Activated CD4-positive, alpha-beta T cell treated with anti-CD3 and anti-CD28 coated beads, Interleukin-2, amount 10 ng/mL, durations not matched to agents 24 days and 14 days (primary cell): ENCODE measurements at regions of chr17 and their contacts with region 1.

Region 1: GRCh38 chr17:64115871-64116534 is 13.9 kb downstream of the ERN1 start:
- DNase-seq: no peak
- H3K4me3 Mint-ChIP-seq: peak overlapping the region; percentile 59
- H3K27ac Mint-ChIP-seq: peak overlapping the region; percentile 79
- H3K4me1 Mint-ChIP-seq: peaks cover 56% of the 10 kb centered on the region
- H3K27me3 Mint-ChIP-seq: no peaks in the 10 kb centered on the region

Region 2: DNA sequence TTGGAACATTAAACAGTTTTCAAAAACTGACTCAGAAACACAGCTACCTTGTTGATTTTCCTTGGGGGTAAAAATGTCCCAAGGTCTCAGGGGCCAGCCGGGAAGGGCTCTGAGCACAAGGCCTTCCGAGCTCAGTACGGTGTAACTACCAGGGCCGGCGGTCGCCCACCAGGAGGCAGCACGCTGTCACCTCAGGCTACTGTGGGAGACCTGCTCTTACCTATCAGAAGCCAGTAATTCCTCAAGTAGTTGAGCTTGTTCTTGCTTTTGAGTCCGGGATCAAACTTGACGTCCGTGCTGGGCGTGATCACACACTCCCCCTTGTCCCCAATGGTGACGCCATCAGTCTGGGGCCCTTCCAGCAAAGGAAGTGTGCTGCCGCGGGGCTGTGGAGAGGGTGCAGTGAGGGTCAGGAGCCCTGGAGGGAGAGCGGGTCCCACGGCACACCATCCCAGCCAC is 52.2 kb before region 1 on chr17:
- intact Hi-C with region 1: loop called (anchors 2 kb)
- DNase-seq: peak; percentile 84
- H3K4me3 Mint-ChIP-seq: no peak overlapping the region
- H3K27ac Mint-ChIP-seq: peak overlapping the region; percentile 37
- H3K4me1 Mint-ChIP-seq: peaks cover 72% of the 10 kb centered on the region
- H3K27me3 Mint-ChIP-seq: no peaks in the 10 kb centered on the region

Region 3: GRCh38 chr17:64081802-64082799 is 33.9 kb before region 1 on chr17:
- intact Hi-C with region 1: loop called (anchors 1 kb)
- DNase-seq: peak; percentile 88
- H3K4me3 Mint-ChIP-seq: peak overlapping the region; percentile 62
- H3K27ac Mint-ChIP-seq: peak overlapping the region; percentile 82
- H3K4me1 Mint-ChIP-seq: peaks cover 41% of the 10 kb centered on the region
- H3K27me3 Mint-ChIP-seq: no peaks in the 10 kb centered on the region

Region 4: DNA sequence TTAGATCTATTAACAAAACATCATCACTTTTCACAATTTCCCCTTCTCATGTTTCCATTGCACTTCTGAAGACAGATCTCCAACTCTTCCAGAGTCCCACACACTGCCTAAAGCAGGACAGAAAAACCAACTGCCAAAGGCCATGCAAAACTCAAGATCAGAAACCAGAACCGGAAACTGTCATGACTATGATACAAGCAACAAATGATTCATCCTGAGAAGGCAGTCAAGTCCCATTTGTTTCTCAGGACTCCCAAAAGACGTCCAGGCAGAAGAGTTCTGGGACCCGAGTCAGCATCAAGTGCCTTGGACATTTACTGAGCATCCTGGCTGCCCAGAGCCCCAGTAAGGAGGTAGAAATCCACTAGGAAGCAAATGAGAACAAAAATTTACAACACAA is 24.9 kb before region 1 on chr17:
- intact Hi-C with region 1: loop called (anchors 1 kb)
- DNase-seq: peak; percentile 76
- H3K4me3 Mint-ChIP-seq: peak overlapping the region; percentile 78
- H3K27ac Mint-ChIP-seq: peak overlapping the region; percentile 98
- H3K4me1 Mint-ChIP-seq: peaks cover 77% of the 10 kb centered on the region
- H3K27me3 Mint-ChIP-seq: no peaks in the 10 kb centered on the region

Region 5: DNA sequence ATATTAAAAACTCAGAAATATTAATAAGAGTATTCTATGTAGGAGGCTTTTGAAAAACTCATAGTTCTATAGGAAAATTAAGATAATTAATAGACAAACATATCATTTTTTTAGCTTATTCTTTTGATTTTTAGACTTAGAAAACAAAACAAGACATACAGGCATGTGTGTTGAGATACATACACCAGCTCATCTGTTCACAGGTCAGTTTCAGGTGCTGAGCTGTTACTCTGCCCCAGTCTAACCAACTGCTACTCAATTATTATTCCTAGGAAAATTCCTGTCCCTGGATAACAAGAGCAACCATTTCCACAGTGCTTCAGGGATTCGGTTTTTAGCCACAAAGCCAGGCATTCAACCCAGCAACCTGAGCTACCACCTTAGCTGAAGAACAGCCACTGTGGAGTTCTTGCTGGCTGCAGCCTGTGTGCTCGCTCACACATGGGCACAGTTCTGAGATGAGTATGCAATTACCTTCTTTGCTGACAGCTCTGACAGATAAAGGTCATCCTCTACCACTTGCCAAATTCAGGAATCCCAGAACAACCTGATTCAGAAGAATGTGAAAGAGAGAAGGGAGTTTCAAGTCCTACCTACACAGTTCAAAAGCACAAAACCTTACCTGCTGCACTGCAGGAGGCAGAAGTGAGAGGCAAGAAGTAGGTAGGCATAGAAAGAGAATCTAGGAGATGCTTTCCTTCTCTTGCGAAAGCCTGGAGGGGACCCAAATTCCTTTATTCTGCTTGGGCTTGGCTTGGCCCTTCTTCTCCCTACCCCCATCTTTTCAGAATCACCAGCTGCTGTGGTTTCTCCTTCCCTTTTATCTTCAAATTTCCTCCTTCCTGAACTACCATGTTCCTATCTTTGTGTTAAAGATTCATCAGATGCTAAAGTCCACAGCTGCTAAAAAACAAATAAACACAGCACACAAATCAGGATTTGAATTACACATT is 84.4 kb after region 1 on chr17:
- intact Hi-C with region 1: no loop called
- DNase-seq: no peak
- H3K4me3 Mint-ChIP-seq: no peak overlapping the region
- H3K27ac Mint-ChIP-seq: no peak overlapping the region
- H3K4me1 Mint-ChIP-seq: peaks cover 26% of the 10 kb centered on the region
- H3K27me3 Mint-ChIP-seq: no peaks in the 10 kb centered on the region

Region 6: GRCh38 chr17:64591944-64592343 is 475.9 kb after region 1 on chr17:
- intact Hi-C with region 1: no loop called
- DNase-seq: no peak
- H3K4me3 Mint-ChIP-seq: no peak overlapping the region
- H3K27ac Mint-ChIP-seq: no peak overlapping the region
- H3K4me1 Mint-ChIP-seq: peaks cover 7% of the 10 kb centered on the region
- H3K27me3 Mint-ChIP-seq: no peaks in the 10 kb centered on the region